Esophagus muscularis mucosa (tissue), 4 donors: ENCODE measurements at regions of chr3 and their contacts with region 1.

Region 1: DNA sequence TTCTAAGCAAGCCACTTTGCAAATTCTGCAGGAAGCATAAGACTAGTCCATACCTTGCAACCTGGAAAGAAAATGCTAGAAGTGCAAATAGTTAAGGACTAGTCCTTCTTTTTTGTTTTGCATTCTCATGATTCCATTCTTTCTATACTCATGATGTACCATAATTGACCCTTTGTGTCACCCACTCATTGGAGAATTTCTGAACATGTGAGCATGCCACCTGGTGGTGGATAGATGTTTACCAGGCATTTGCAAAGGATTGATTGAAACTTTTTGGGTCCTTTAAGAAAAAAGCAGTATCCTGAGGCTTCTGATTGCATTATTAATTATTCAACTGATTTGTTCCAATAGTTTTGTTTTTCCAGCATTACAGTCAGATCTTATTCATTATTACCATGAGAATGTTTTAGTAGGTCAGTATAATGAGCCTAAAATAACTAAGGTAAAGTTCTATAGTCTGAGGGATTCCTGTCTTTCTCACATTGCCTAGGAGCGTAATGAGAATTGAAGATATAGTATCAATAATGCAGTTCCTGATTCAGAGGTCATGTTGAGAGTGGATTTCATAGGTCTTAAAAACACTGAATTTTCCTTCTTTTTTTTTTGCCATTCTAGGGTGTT is 20.2 kb upstream of the DIPK2A start:
- DNase-seq: no peak
- H3K4me3 ChIP-seq: no peak overlapping the region
- H3K27ac ChIP-seq: no peak overlapping the region
- H3K4me1 ChIP-seq: no peaks in the 10 kb centered on the region
- H3K27me3 ChIP-seq: no peaks in the 10 kb centered on the region
- CTCF ChIP-seq: peak; percentile 53 to 71 (median 67)
- EP300 ChIP-seq: no peak
- POLR2A ChIP-seq: no peak

Region 2: GRCh38 chr3:143668924-143669790 is 282.3 kb before region 1 on chr3:
- intact Hi-C with region 1: no loop called
- DNase-seq: no peak
- H3K4me3 ChIP-seq: no peak overlapping the region
- H3K27ac ChIP-seq: no peak overlapping the region
- H3K4me1 ChIP-seq: peaks cover 0 to 2% (median under 1%) of the 10 kb centered on the region in 4 donors
- H3K27me3 ChIP-seq: no peaks in the 10 kb centered on the region
- CTCF ChIP-seq: no peak
- EP300 ChIP-seq: no peak
- POLR2A ChIP-seq: no peak

Region 3: DNA sequence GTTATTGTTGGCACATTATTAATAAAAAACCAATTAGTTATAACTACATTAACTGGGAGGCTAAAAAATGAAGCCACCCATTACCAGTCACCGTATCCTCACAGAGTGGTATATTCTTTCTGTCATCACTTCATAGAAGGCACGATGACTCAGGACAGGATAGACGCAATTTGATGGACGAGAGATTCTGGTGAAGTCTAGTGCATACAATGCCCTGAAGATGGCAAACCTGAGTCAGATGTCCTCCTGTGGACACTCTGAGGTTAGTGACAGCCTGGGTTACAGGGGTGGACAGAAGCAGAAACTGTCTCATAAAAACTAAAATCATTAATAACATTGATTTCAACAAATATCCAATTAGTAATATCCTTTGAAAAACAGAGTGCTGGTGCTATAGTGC is 253.5 kb before region 1 on chr3:
- intact Hi-C with region 1: no loop called
- DNase-seq: no peak
- H3K4me3 ChIP-seq: no peak overlapping the region
- H3K27ac ChIP-seq: no peak overlapping the region
- H3K4me1 ChIP-seq: peaks cover 0 to 3% (median 0%) of the 10 kb centered on the region in 4 donors
- H3K27me3 ChIP-seq: no peaks in the 10 kb centered on the region
- CTCF ChIP-seq: no peak
- EP300 ChIP-seq: no peak
- POLR2A ChIP-seq: no peak

Region 4: GRCh38 chr3:143775459-143775858 is 176.0 kb before region 1 on chr3:
- intact Hi-C with region 1: loop called (anchors 2 kb)
- DNase-seq: no peak
- H3K4me3 ChIP-seq: peak overlapping the region; percentile 23 to 39 (median 31)
- H3K27ac ChIP-seq: no peak overlapping the region
- H3K4me1 ChIP-seq: peaks cover 0 to 30% (median 23%) of the 10 kb centered on the region in 4 donors
- H3K27me3 ChIP-seq: no peaks in the 10 kb centered on the region
- CTCF ChIP-seq: peak; percentile 51 to 57 (median 55)
- EP300 ChIP-seq: no peak
- POLR2A ChIP-seq: no peak

Region 5: GRCh38 chr3:143885780-143886427 is 65.6 kb before region 1 on chr3:
- intact Hi-C with region 1: loop called (anchors 5 kb)
- DNase-seq: no peak
- H3K4me3 ChIP-seq: no peak overlapping the region
- H3K27ac ChIP-seq: no peak overlapping the region
- H3K4me1 ChIP-seq: no peaks in the 10 kb centered on the region
- H3K27me3 ChIP-seq: no peaks in the 10 kb centered on the region
- CTCF ChIP-seq: peak; percentile 49 to 68 (median 52)
- EP300 ChIP-seq: no peak
- POLR2A ChIP-seq: no peak

Region 6: DNA sequence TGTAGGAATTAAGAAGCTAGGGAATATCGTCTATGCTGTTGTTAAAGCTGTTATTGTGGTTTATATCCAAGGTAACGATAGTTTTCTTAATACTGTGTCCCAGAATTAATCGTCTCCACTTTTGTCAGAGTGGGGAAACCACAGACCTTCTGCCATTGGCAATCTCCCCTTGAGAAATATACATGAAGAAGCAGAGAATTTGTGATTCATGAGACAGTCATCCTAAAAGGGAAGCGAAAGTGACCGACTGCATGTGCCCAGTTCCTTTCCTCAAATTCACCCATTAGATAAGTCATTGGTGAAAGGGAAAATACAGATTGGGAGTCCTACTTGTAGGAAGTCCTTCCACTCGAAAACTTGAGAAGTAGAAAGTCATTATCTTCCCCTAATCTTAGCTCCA is 46.8 kb after region 1 on chr3:
- intact Hi-C with region 1: no loop called
- DNase-seq: no peak
- H3K4me3 ChIP-seq: no peak overlapping the region
- H3K27ac ChIP-seq: no peak overlapping the region
- H3K4me1 ChIP-seq: no peaks in the 10 kb centered on the region
- H3K27me3 ChIP-seq: no peaks in the 10 kb centered on the region
- CTCF ChIP-seq: no peak
- EP300 ChIP-seq: no peak
- POLR2A ChIP-seq: no peak

Region 7: DNA sequence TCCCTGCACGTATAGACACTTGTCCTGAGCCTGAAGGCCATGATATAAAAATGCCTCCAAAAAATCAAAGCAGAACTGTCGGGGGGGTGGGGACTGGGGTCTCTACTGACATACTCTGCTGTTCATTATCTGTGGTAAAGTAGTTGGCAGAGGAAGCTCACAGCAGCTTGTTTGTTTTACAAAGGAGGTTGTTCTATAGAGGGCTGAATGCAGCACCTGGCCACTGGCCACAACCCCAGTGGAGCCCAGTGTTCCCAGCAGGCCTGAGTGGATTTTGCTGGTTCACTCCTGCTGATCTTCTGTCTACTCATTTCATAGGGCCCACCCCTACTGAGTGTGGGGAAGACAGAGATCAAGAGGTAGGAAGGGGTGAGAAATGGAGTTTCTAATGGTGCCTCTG is 145.7 kb after region 1 on chr3:
- intact Hi-C with region 1: no loop called
- DNase-seq: no peak
- H3K4me3 ChIP-seq: no peak overlapping the region
- H3K27ac ChIP-seq: no peak overlapping the region
- H3K4me1 ChIP-seq: peaks cover 0 to 2% (median under 1%) of the 10 kb centered on the region in 4 donors
- H3K27me3 ChIP-seq: no peaks in the 10 kb centered on the region
- CTCF ChIP-seq: no peak
- EP300 ChIP-seq: no peak
- POLR2A ChIP-seq: no peak